ENCODE measurements at regions of chr9 and their contacts with region 1.

Region 1: GRCh38 chr9:132268725-132269352 is 85.9 kb downstream of the SETX start:
- H3K4me3 ChIP-seq: no peak overlapping the region
- H3K27ac ChIP-seq: no peak overlapping the region; the same call in 1 of the 2 replicates
- H3K4me1 ChIP-seq: no peaks in the 10 kb centered on the region
- CTCF ChIP-seq: peak; percentile 77; the same call in 1 of the 2 replicates

Region 2: DNA sequence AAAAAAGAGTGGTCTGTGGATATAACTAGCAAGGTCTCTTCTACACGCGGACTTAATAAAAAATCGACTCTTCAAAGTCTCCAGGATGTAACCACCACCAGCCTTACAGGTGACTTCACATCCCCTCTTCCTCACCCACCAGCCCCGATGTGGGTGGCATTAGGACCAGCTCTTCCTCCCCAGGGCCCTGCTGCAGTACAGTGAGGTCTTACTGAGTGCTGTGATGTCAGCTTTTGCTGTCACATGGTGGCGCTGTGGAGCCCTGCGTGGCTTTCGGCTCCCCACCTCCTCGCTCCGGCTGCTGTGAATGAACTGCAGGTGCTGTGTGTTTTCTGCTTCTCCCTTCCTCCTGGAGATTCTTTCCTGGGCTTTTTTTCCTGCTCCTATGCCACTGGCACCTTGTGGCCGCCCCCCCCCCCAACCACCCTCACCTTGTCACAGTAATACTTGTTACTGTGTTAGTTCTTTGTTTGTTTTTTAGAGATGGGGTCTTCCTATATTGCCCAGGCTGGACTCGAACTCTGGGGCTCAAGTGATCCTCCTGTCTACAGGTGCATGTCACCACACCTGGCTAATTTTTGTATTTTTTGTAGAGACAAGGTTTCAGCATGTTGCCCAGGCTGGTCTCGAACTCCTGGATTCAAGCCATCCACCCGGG is 513.2 kb before region 1 on chr9:
- CTCF ChIA-PET with region 1: interaction called, 82 read pairs
- POLR2A ChIA-PET with region 1: no interaction called
- H3K4me3 ChIP-seq: no peak overlapping the region
- H3K27ac ChIP-seq: no peak overlapping the region
- H3K4me1 ChIP-seq: no peaks in the 10 kb centered on the region
- CTCF ChIP-seq: peak; percentile 88

Region 3: GRCh38 chr9:132240753-132241493 is 27.9 kb before region 1 on chr9:
- CTCF ChIA-PET with region 1: interaction called, 13 read pairs
- POLR2A ChIA-PET with region 1: no interaction called
- H3K4me3 ChIP-seq: peak overlapping the region; percentile 50
- H3K27ac ChIP-seq: no peak overlapping the region
- H3K4me1 ChIP-seq: peaks cover 2% of the 10 kb centered on the region; the same call in 1 of the 2 replicates
- CTCF ChIP-seq: peak; percentile 10; the same call in 1 of the 2 replicates

Region 4: GRCh38 chr9:132288361-132288760 is 19.5 kb after region 1 on chr9:
- CTCF ChIA-PET with region 1: interaction called, 25 read pairs
- POLR2A ChIA-PET with region 1: interaction called, 3 read pairs
- H3K4me3 ChIP-seq: no peak overlapping the region
- H3K27ac ChIP-seq: no peak overlapping the region
- H3K4me1 ChIP-seq: peaks cover 4% of the 10 kb centered on the region; the same call in 1 of the 2 replicates
- CTCF ChIP-seq: no peak

Region 5: DNA sequence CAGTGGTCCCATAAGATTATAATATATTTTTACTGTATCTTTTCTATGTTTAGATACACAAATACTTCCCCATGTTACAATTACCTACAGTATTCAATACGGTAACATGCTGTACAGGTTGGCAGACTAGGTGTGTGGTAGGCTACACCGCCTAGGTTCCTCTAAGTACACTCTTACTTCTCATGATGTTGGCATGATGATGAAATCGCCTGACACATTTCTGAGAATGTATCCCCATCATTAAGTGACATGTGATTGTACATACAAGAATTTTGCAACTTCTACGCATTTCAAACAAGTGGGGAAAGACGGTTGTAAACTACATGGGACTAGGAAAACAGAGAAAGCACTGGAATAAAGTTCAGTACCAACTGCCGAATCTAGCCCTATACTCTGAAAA is 32.7 kb after region 1 on chr9:
- CTCF ChIA-PET with region 1: interaction called, 11 read pairs
- POLR2A ChIA-PET with region 1: no interaction called
- H3K4me3 ChIP-seq: no peak overlapping the region
- H3K27ac ChIP-seq: no peak overlapping the region
- H3K4me1 ChIP-seq: no peaks in the 10 kb centered on the region
- CTCF ChIP-seq: no peak

Region 6: DNA sequence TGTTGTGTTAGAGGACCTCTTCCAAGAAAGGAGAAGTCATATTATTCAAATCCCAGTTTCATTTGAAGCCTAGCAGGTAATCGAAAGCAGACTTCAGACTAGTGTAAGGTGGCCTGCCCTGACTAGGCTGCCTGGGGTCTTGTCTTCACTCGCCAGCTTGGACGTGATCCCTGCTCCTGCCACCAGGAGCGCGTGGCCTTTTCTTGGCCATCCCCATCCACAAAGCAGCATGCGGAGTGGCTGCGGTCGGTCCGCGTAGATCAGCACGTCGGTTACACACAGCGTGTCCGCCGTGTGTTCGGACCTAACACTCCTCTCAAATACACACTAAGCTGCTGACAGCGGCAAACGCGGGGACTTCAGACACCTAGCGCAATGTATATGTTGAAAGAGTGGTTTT is 178.5 kb after region 1 on chr9:
- CTCF ChIA-PET with region 1: no interaction called
- POLR2A ChIA-PET with region 1: no interaction called
- H3K4me3 ChIP-seq: no peak overlapping the region
- H3K27ac ChIP-seq: no peak overlapping the region
- H3K4me1 ChIP-seq: no peaks in the 10 kb centered on the region
- CTCF ChIP-seq: no peak